H1 (cell line): ENCODE measurements at regions of chr2 and their contacts with region 1.

Region 1: DNA sequence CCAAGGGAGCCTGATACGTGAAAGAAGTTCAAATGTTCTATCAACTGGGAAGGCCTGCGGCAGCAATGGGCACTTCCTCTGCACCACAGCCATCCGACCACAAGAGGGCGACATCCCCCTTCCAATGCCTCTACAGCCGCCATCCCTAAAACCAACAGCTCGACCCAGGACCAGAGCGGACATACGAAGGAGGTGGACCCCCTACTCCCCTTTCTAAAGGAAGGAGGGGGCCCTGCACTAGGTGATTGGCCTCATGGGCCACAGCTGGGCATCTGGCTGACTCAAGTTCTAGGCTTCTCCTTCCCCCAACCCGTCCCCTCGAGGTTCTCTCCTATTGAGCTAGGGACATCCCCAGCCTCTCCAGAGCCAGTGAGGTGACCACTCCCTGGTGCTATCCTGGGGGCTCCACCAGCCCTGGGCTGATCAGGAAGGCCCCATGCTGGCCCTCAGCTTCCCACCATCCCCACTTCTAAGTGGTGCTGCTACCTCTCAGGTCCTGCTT is 217.2 kb downstream of the TNS1 start:
- DNase-seq: peak; percentile 53 to 96
- H3K4me3 ChIP-seq: no peak overlapping the region
- H3K27ac ChIP-seq: no peak overlapping the region
- H3K4me1 ChIP-seq: peaks cover 0 to 2% (median 0%) of the 10 kb centered on the region in 4 experiments; a peak in 1 of 7 replicates
- H3K27me3 ChIP-seq: no peaks in the 10 kb centered on the region; a peak in 1 of 7 replicates
- CTCF ChIP-seq: peak; percentile 93 to 98 (median 96)
- EP300 ChIP-seq: no peak
- POLR2A ChIP-seq: no peak
- RAD21 ChIP-seq: peak; percentile 98 to 100

Region 2: GRCh38 chr2:217798743-217799562 is 13.4 kb after region 1 on chr2:
- CTCF ChIA-PET with region 1: interaction called, 121 read pairs
- POLR2A ChIA-PET with region 1: interaction called, 3 read pairs
- DNase-seq: peak in 1 of 2 experiments; percentile 26
- H3K4me3 ChIP-seq: no peak overlapping the region
- H3K27ac ChIP-seq: no peak overlapping the region
- H3K4me1 ChIP-seq: peaks cover 0 to 5% (median 2%) of the 10 kb centered on the region in 4 experiments; a peak in 1 of 7 replicates
- H3K27me3 ChIP-seq: no peaks in the 10 kb centered on the region
- CTCF ChIP-seq: no peak
- EP300 ChIP-seq: no peak
- POLR2A ChIP-seq: no peak
- RAD21 ChIP-seq: no peak

Region 3: DNA sequence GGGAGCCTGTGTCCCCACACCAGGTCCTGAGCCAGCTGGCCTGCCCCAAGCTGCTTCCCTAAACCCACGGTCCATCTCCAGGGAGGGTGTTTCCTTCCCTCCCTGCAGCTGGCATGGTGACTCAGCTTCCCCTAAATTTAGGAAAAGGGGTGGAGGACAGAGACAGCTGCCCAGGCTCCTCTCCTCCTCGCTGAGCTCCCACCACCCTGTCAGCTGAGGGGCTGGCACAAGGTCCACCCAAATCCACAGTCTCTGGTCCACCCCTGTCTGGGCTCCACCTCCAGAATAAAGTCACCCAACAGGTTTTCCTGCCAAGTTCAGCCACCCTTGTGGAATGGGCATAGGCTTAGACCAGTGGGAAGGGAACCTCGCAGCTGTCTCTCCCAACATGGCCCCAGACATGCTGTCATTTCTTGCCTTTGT is 60.7 kb after region 1 on chr2:
- CTCF ChIA-PET with region 1: interaction called, 20 read pairs
- POLR2A ChIA-PET with region 1: interaction called, 4 read pairs
- DNase-seq: no peak
- H3K4me3 ChIP-seq: no peak overlapping the region
- H3K27ac ChIP-seq: no peak overlapping the region
- H3K4me1 ChIP-seq: no peaks in the 10 kb centered on the region; a peak in 1 of 7 replicates
- H3K27me3 ChIP-seq: no peaks in the 10 kb centered on the region
- CTCF ChIP-seq: no peak
- EP300 ChIP-seq: no peak
- POLR2A ChIP-seq: no peak
- RAD21 ChIP-seq: no peak

Region 4: DNA sequence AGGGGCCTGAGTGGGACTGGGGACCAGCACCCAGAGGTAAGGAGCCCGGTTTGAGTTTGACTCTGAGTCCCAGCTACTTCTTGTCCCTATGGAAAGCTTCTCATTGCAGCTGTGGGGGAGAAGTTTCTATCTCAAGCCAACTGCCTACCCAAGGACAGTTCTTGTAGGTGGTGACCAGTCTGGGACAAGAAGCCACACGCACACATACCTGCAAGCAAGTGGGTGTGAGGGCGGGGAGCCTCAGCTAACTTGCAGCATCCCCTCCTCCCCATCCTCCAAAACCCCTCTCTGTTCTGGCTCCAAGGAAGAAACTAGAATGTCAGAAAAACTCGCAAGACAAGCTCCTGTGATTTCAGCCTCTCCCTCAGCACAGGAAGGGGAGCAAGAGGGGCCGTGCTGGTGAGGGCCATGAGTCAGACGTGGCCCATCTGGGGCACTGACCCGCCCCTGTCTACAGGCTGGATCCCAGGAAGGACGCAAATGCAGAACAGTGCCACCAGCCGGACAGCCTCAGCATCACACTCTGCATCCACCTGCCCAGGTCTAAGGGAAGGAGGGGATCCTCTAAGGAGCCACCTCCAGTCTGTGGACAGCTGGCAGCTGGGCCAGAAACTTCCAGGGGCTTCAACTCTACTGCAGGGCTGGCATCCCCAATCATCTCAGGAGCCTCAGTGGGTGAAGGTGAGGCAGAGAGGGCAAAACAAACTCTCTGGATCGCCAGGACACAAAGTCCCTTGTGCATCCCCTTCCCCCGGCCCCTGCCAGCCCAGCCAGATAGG is 113.8 kb after region 1 on chr2:
- CTCF ChIA-PET with region 1: interaction called, 207 read pairs
- POLR2A ChIA-PET with region 1: no interaction called
- DNase-seq: peak; percentile 71 to 93
- H3K4me3 ChIP-seq: no peak overlapping the region
- H3K27ac ChIP-seq: no peak overlapping the region
- H3K4me1 ChIP-seq: peaks cover 0 to 4% (median 2%) of the 10 kb centered on the region in 4 experiments; a peak in 4 of 7 replicates
- H3K27me3 ChIP-seq: no peaks in the 10 kb centered on the region; a peak in 1 of 7 replicates
- CTCF ChIP-seq: peak; percentile 79 to 98 (median 90)
- EP300 ChIP-seq: no peak
- POLR2A ChIP-seq: no peak
- RAD21 ChIP-seq: peak; percentile 51 to 62

Region 5: DNA sequence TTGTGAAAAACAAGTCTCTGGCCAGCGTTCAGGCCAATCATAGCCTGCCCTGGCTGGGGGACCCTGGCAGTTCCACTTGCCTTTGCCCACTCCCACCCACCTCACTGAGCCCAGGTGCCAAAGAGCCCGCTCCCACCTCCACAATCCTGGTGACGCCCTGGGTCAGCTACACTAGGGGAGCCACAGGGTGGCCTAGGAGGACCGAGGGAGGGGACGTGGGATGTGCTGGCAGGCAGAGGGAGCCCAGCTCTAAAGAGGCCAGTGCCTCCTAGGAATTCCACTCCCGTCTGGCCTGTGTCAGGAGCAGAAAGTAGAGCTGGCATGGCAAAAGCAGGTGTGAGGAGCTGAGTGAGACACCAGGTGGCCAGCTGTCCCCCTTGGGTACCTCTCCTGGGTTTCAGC is 167.9 kb after region 1 on chr2:
- CTCF ChIA-PET with region 1: interaction called, 25 read pairs
- POLR2A ChIA-PET with region 1: no interaction called
- DNase-seq: no peak
- H3K4me3 ChIP-seq: no peak overlapping the region
- H3K27ac ChIP-seq: no peak overlapping the region
- H3K4me1 ChIP-seq: peaks cover 0 to 10% (median 3%) of the 10 kb centered on the region in 4 experiments; a peak in 6 of 7 replicates
- H3K27me3 ChIP-seq: peaks cover 0 to 3% (median 0%) of the 10 kb centered on the region in 4 experiments; a peak in 1 of 7 replicates
- CTCF ChIP-seq: no peak
- EP300 ChIP-seq: no peak
- POLR2A ChIP-seq: no peak
- RAD21 ChIP-seq: no peak

Region 6: DNA sequence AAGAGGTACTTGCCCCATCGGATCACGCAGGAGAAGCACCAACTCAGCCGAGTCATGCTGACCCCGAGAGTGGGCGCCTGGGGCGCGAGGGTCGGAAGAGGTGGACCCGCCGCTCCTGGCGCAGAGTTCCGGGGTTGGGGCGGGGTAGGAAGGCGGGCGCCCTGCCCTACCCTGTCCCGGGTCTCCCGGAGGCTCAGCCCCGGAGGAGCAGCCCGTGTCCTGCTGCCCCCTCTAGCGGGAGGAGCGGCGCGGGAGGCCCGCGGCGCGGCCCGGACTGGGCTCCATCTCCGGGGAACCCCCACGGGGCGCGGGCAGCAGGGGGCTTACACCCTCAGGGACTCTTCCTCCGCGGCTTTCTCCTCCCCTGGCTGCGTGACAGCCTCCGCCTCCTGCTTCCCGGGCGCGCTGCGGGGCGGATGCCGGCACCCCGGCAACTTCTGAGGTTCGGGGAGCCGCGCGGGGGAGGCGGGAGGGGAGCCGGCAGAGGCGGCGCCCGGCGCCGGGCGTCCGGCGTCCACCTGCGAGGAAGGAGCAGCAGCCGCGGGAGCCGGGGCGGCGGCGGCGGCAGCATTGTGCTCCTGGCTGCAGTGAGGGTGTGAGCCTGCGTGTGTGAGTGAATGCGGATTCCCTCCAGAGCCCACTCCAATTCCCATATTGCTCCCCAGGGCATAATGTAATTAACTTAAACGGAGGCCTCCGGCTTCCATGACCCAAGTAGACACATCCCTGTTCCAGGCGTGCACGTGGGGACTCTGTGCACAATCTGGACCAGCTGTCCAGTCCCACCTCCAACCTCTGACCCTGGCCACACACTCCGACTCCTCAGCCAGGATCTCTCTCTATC is 224.8 kb after region 1 on chr2:
- CTCF ChIA-PET with region 1: interaction called, 18 read pairs
- POLR2A ChIA-PET with region 1: no interaction called
- DNase-seq: peak in 1 of 2 experiments; percentile 76
- H3K4me3 ChIP-seq: peak overlapping the region; percentile 43 to 73 (median 56)
- H3K27ac ChIP-seq: no peak overlapping the region
- H3K4me1 ChIP-seq: peaks cover 0 to 12% (median 8%) of the 10 kb centered on the region in 4 experiments; a peak in 5 of 7 replicates
- H3K27me3 ChIP-seq: peaks cover 12 to 40% (median 32%) of the 10 kb centered on the region in 4 experiments
- CTCF ChIP-seq: peak in 2 of 3 experiments; percentile 18 to 29; a peak in 3 of 4 replicates
- EP300 ChIP-seq: no peak
- POLR2A ChIP-seq: no peak
- RAD21 ChIP-seq: peak in 1 of 2 experiments; percentile 42; a peak in 1 of 4 replicates